Endothelial cell of umbilical vein (primary cell): ENCODE measurements at regions of chr11 and their contacts with region 1.

Region 1: DNA sequence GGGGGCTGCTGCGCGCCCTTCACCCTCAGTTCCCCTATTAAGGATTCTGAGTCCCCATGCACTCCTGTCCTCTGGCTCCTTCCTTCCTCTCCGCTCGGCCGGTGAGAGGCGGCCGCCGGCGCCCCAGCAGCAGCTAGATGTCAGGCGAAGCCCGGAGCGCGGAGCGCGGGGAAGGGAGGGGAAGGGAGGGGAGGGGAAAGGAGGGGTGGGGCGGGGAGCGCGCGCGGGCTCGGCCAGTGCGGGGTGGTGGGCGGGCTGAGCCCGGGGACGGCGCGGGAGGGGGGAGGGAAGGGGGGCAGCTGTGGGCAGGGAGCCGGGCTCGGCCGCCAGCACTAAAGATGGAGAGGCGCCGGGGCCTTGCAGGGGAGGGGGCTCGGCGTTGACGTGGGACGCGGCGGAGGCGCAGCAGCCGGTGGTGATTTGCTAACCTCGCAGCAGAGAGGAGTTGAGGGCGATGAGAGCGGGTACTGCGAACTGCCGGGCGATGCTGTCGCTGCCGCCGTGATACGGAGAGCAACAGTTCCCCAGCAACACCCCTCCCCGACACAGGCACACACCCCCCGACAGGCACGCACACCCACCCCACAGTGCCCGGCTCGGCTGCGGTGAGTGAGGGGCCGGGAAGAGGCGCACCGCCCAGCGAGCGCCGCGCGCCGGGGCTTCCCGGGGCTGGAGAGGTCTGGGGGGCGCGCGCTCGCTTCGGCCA is at the start of gene ZBTB16:
- DNase-seq: peak; percentile 83
- H3K4me3 ChIP-seq: peak within 1 kb of the TSS; percentile 86 to 90 (median 87)
- H3K27ac ChIP-seq: peak within 1 kb of the TSS; percentile 78
- H3K4me1 ChIP-seq: peaks cover 8% of the 10 kb centered on the region
- H3K27me3 ChIP-seq: peaks cover 0 to 2% of the 10 kb centered on the region in 2 experiments
- CTCF ChIP-seq: peak; percentile 4 to 29
- POLR2A ChIP-seq: no peak
- total RNA-seq, gene ZBTB16: 19.5 and 20.3 TPM in 2 replicates

Region 2: DNA sequence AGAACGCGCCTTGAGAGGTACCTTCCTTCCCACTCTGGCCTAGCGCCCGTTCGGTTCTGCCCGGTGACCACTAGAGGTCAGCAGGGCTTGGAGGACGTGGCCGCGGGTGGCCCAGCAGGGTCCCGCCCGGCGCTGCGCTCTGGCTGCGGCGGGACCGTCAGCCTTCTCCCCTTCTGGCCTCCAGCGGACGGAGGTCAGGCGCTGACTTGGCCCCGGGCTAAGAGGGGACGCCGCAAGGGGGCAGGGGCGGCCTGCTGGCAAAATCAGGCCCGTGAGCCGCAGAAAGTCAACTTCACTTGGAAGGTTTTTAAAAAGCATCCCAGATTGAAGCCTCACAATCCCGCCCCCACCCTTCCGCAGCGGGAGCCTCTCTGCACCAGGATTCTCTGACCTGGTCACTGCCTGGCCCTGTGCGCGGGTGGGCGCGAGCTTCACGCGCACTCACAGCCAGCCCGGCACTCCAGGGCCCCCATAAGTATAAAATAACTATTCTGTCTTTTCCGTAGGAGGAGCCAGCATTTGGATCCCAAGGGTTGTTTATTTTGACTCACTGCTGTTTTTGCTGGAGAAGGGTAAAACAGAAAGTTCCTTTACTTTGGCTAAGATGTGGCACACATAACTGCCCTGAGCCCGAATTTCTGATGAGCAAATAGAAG is 23.1 kb before region 1 on chr11:
- CTCF ChIA-PET with region 1: interaction called, 20 read pairs
- POLR2A ChIA-PET with region 1: no interaction called
- dilution Hi-C with region 1: no loop called
- intact Hi-C with region 1: loop called (anchors 1 kb)
- DNase-seq: peak; percentile 73
- H3K4me3 ChIP-seq: peak overlapping the region; percentile 30 to 46 (median 45)
- H3K27ac ChIP-seq: peak overlapping the region; percentile 56
- H3K4me1 ChIP-seq: peaks cover 15% of the 10 kb centered on the region
- H3K27me3 ChIP-seq: peaks cover 0 to 1% of the 10 kb centered on the region in 2 experiments
- CTCF ChIP-seq: peak; percentile 91 to 93
- POLR2A ChIP-seq: no peak

Region 3: DNA sequence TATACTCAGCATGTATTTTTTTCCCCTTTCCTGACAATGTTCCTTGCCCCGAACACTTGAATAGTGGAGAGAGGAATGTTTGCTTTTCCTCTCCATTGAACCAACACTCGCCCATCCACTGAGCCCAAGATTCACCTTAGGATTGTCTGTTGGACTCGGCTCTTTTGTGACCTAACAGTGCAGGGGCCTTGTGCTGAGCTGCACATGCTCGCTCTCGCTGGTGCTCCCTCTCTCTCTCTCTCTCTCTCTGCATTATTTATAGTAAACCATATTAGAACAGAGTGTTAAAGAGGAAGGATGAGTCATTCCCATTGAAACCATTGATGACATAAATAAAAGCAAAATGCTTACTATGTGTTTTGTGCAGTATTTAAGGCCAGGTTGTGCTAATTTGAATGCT is 20.8 kb after region 1 on chr11:
- CTCF ChIA-PET with region 1: interaction called, 6 read pairs
- POLR2A ChIA-PET with region 1: no interaction called
- dilution Hi-C with region 1: no loop called
- intact Hi-C with region 1: loop called (anchors 2 kb)
- DNase-seq: peak; percentile 80
- H3K4me3 ChIP-seq: no peak overlapping the region
- H3K27ac ChIP-seq: peak overlapping the region; percentile 94
- H3K4me1 ChIP-seq: peaks cover 38% of the 10 kb centered on the region
- H3K27me3 ChIP-seq: no peaks in the 10 kb centered on the region
- CTCF ChIP-seq: no peak
- POLR2A ChIP-seq: no peak

Region 4: GRCh38 chr11:114135737-114136151 is 76.3 kb after region 1 on chr11:
- CTCF ChIA-PET with region 1: interaction called, 8 read pairs
- POLR2A ChIA-PET with region 1: no interaction called
- dilution Hi-C with region 1: no loop called
- intact Hi-C with region 1: loop called (anchors 1 kb)
- DNase-seq: no peak
- H3K4me3 ChIP-seq: no peak overlapping the region
- H3K27ac ChIP-seq: no peak overlapping the region
- H3K4me1 ChIP-seq: peaks cover 42% of the 10 kb centered on the region
- H3K27me3 ChIP-seq: no peaks in the 10 kb centered on the region
- CTCF ChIP-seq: no peak
- POLR2A ChIP-seq: no peak

Region 5: GRCh38 chr11:114219559-114220349 is 160.3 kb after region 1 on chr11:
- CTCF ChIA-PET with region 1: interaction called, 13 read pairs
- POLR2A ChIA-PET with region 1: no interaction called
- dilution Hi-C with region 1: no loop called
- intact Hi-C with region 1: loop called (anchors 1 kb)
- DNase-seq: peak; percentile 95
- H3K4me3 ChIP-seq: no peak overlapping the region
- H3K27ac ChIP-seq: peak overlapping the region; percentile 83
- H3K4me1 ChIP-seq: peaks cover 17% of the 10 kb centered on the region
- H3K27me3 ChIP-seq: no peaks in the 10 kb centered on the region
- CTCF ChIP-seq: no peak
- POLR2A ChIP-seq: peak; percentile 42